Caco-2 (cell line): ENCODE measurements at regions of chr6 and their contacts with region 1.

Region 1: DNA sequence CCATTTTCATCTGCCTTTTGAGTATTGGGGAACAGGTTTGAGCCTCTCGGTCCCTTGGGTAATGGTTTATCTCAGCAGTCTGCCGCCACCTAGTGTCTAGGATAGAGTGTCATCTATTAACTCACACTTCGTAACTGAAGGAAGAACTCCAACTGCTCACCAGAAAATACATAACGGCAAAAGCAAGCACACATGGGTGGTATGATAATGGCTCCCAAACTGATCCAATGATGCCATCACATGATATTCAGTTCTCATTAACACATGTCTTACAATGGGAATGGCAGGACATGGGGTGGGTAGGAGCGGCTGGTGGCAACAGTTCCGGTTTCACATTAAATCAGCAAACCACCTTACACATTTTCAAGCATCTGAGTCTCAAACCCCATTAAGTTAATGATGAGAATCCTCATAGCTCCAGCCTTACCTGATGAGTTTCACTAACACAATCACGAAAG is 110.7 kb upstream of the PHACTR1 start:
- DNase-seq: peak; percentile 61 to 71
- H3K4me3 ChIP-seq: no peak overlapping the region
- H3K4me3 Mint-ChIP-seq: no peak overlapping the region
- H3K27ac Mint-ChIP-seq: no peak overlapping the region
- H3K4me1 ChIP-seq: peaks cover 19% of the 10 kb centered on the region
- H3K4me1 Mint-ChIP-seq: peaks cover 15% of the 10 kb centered on the region
- H3K27me3 ChIP-seq: no peaks in the 10 kb centered on the region
- H3K27me3 Mint-ChIP-seq: no peaks in the 10 kb centered on the region
- CTCF ChIP-seq: peak; percentile 71 to 72

Region 2: DNA sequence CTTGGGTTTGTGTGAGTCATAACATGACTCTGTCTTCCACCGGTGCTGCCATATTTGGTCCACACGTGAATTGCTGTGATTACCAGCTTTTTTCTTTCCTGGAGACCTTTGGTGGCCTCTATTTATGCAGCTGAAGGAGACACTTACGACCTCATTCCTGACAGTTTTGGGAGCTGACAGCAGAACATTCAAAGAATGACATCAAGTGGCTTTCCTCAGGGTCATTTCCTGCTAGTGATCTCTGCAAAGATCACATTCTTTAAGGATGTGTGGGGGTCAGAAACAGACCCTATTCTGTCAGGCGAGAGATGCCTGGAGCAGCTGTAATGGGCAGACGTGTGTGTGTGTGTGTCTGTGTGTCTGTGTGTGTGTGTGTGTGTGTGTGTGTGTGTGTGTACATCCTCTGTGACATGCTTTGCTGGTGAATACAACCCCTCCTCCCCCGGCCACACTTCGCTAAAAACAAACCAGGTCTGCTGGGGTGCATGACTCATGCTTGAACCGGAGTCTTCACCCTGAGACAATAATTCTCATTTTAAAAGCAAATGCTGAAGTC is 952.8 kb before region 1 on chr6:
- CTCF ChIA-PET with region 1: no interaction called
- POLR2A ChIA-PET with region 1: no interaction called
- intact Hi-C with region 1: loop called (anchors 1 kb)
- DNase-seq: peak in 1 of 2 experiments; percentile 43
- H3K4me3 ChIP-seq: no peak overlapping the region
- H3K4me3 Mint-ChIP-seq: no peak overlapping the region
- H3K27ac Mint-ChIP-seq: peak overlapping the region; percentile 62
- H3K4me1 ChIP-seq: peaks cover 32% of the 10 kb centered on the region
- H3K4me1 Mint-ChIP-seq: peaks cover 17% of the 10 kb centered on the region
- H3K27me3 ChIP-seq: no peaks in the 10 kb centered on the region
- H3K27me3 Mint-ChIP-seq: no peaks in the 10 kb centered on the region
- CTCF ChIP-seq: no peak

Region 3: GRCh38 chr6:12331956-12332749 is 273.8 kb before region 1 on chr6:
- CTCF ChIA-PET with region 1: no interaction called
- POLR2A ChIA-PET with region 1: no interaction called
- intact Hi-C with region 1: loop called (anchors 2 kb)
- DNase-seq: peak; percentile 86 to 90
- H3K4me3 ChIP-seq: no peak overlapping the region
- H3K4me3 Mint-ChIP-seq: peak overlapping the region; percentile 34
- H3K27ac Mint-ChIP-seq: peak overlapping the region; percentile 91
- H3K4me1 ChIP-seq: peaks cover 44% of the 10 kb centered on the region
- H3K4me1 Mint-ChIP-seq: peaks cover 54% of the 10 kb centered on the region
- H3K27me3 ChIP-seq: no peaks in the 10 kb centered on the region; the same call in 1 of the 2 replicates
- H3K27me3 Mint-ChIP-seq: no peaks in the 10 kb centered on the region
- CTCF ChIP-seq: no peak

Region 4: DNA sequence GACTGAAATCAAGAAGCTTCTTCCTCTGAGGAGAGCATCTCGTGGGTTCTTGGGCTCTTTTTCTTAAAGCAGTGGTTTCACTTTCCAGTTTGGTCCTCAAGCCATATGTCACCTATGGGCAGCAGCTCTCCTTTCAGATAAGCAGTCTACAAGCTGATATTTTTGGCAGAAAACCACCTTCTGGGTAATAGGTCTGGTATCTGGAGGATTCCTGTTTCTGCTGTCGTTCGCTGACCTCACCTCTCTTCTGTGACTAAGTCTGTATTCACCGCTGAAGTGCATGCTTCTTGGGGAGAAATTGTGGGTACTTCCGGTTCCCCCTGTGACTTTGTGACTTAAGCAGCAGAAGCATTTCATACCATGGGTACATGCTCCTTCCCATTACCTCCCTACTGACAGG is 122.2 kb before region 1 on chr6:
- CTCF ChIA-PET with region 1: no interaction called
- POLR2A ChIA-PET with region 1: no interaction called
- intact Hi-C with region 1: loop called (anchors 2 kb)
- DNase-seq: no peak
- H3K4me3 ChIP-seq: no peak overlapping the region
- H3K4me3 Mint-ChIP-seq: peak overlapping the region; percentile 21
- H3K27ac Mint-ChIP-seq: peak overlapping the region; percentile 63
- H3K4me1 ChIP-seq: peaks cover 40% of the 10 kb centered on the region
- H3K4me1 Mint-ChIP-seq: peaks cover 42% of the 10 kb centered on the region
- H3K27me3 ChIP-seq: no peaks in the 10 kb centered on the region
- H3K27me3 Mint-ChIP-seq: no peaks in the 10 kb centered on the region
- CTCF ChIP-seq: no peak

Region 5: DNA sequence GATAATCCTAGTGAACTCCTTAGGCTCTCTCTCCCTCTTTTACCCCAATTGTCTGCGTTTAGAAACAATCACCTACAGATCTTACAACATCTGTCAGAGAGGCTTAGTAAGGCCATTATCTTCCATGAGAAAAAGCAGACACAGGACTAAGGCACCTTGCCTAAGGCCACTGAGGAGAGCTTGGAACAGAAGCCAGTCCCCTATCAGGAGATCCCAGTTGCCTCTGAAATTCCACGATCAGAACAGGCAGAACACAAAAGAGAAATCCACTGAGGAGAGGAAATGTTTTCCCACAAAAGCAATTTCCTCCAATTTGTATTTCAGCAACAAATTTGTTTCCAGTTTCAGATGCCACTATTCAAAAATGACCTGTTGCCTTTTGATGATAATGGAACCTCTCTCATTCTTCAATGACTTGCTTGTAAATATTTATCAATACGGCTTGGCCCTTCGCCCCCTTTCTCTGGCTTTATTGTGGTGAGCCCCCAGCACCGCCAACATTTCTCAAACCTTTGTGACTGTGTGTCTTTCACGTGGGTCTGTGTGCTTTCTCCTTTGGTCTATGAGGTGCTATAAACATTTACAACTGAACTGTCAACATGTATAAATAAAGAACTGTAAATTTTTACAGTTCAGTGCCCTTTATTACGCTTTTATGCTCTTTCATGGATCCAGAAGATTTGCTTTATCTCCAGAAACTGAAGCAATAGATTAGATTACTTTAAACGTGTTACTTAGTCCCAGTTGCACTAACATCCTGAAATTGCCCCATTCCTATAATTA is 77.1 kb before region 1 on chr6:
- CTCF ChIA-PET with region 1: no interaction called
- POLR2A ChIA-PET with region 1: no interaction called
- intact Hi-C with region 1: loop called (anchors 2 kb)
- DNase-seq: peak; percentile 58 to 72
- H3K4me3 ChIP-seq: no peak overlapping the region
- H3K4me3 Mint-ChIP-seq: no peak overlapping the region
- H3K27ac Mint-ChIP-seq: no peak overlapping the region
- H3K4me1 ChIP-seq: 0 out of 2 replicates have a peak, but pooled peaks cover 11% of the 10 kb centered on the region
- H3K4me1 Mint-ChIP-seq: peaks cover 25% of the 10 kb centered on the region
- H3K27me3 ChIP-seq: no peaks in the 10 kb centered on the region
- H3K27me3 Mint-ChIP-seq: no peaks in the 10 kb centered on the region
- CTCF ChIP-seq: no peak

Region 6: GRCh38 chr6:12572896-12573827 is 32.8 kb before region 1 on chr6:
- CTCF ChIA-PET with region 1: no interaction called
- POLR2A ChIA-PET with region 1: no interaction called
- intact Hi-C with region 1: no loop called
- DNase-seq: peak; percentile 51 to 60
- H3K4me3 ChIP-seq: no peak overlapping the region
- H3K4me3 Mint-ChIP-seq: peak overlapping the region; percentile 56
- H3K27ac Mint-ChIP-seq: peak overlapping the region; percentile 95
- H3K4me1 ChIP-seq: peaks cover 45% of the 10 kb centered on the region
- H3K4me1 Mint-ChIP-seq: peaks cover 42% of the 10 kb centered on the region
- H3K27me3 ChIP-seq: no peaks in the 10 kb centered on the region
- H3K27me3 Mint-ChIP-seq: no peaks in the 10 kb centered on the region
- CTCF ChIP-seq: no peak